Psoas muscle (tissue), 8 donors: ENCODE measurements at regions of chr22 and their contacts with region 1.

Region 1: GRCh38 chr22:44697423-44698141 is 4.4 kb upstream of the PRR5 start:
- DNase-seq: peak; percentile 81 to 87
- ATAC-seq: peak; percentile 70 to 76 (median 72)
- H3K4me3 ChIP-seq: no peak overlapping the region
- H3K27ac ChIP-seq: no peak overlapping the region
- H3K4me1 ChIP-seq: no peaks in the 10 kb centered on the region
- H3K27me3 ChIP-seq: peaks cover 0 to 27% (median 15%) of the 10 kb centered on the region in 3 donors
- CTCF ChIP-seq: peak; percentile 83

Region 2: DNA sequence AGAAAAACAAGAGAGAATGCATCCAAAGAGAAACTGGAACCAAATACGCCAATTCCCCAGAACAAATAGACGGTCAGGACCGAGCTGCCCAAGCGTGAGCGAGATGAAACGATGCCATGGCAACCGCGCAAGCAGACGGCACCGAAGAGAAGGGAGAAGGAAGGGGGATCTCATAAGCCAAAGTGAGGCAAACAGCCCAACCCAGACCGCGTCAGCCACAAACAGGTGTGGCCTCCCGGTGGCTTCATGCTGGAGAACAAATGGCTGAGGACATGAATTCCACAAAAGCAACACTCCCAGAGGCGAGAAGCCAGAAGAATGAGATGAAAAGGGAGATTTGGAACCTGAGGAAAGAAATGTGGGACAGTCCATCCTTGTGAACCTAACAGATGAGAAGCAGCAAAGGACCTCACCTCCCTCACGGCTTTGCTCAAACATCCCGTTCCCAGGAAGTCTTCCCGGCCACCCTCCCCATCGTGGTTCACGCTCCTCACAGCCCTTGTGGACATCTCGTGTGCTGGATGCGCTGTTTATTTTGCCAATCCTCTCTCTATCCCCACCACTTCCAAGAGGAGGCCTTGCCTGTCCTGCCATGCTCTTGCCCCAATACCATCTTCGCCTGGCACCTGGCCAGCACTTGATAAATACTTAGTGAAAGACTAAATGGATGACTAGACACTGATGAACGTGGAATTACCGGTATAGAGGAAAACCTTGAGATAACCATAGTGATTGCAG is 110.4 kb before region 1 on chr22:
- intact Hi-C with region 1: no loop called
- DNase-seq: peak in 1 of 2 donors; percentile 28
- ATAC-seq: no peak
- H3K4me3 ChIP-seq: no peak overlapping the region
- H3K27ac ChIP-seq: no peak overlapping the region
- H3K4me1 ChIP-seq: no peaks in the 10 kb centered on the region
- H3K27me3 ChIP-seq: peaks cover 0 to 51% (median 15%) of the 10 kb centered on the region in 3 donors
- CTCF ChIP-seq: no peak

Region 3: GRCh38 chr22:44735540-44736488 is 38.2 kb after region 1 on chr22:
- intact Hi-C with region 1: loop called (anchors 1 to 2 kb)
- DNase-seq: peak; percentile 71 to 85
- ATAC-seq: peak; percentile 63 to 82 (median 66)
- H3K4me3 ChIP-seq: no peak overlapping the region
- H3K27ac ChIP-seq: no peak overlapping the region
- H3K4me1 ChIP-seq: no peaks in the 10 kb centered on the region
- H3K27me3 ChIP-seq: peaks cover 0 to 35% (median 3%) of the 10 kb centered on the region in 3 donors
- CTCF ChIP-seq: peak; percentile 95